ENCODE measurements at regions of chrX and their contacts with region 1.

Region 1: GRCh38 chrX:79107891-79108718 is 36.4 kb upstream of the GPR174 start:
- DNase-seq: peak in 4 of 10 donors; percentile 12 to 76 (median 68)
- ATAC-seq: peak; percentile 90 to 95
- H3K4me3 Mint-ChIP-seq: peak overlapping the region; percentile 31 to 77 (median 64)
- H3K27ac Mint-ChIP-seq: peak overlapping the region; percentile 94 to 99 (median 96)
- H3K4me1 Mint-ChIP-seq: peaks cover 9 to 67% (median 44%) of the 10 kb centered on the region in 4 donors
- H3K27me3 Mint-ChIP-seq: no peaks in the 10 kb centered on the region

Region 2: GRCh38 chrX:79065696-79066095 is 42.4 kb before region 1 on chrX:
- POLR2A ChIA-PET with region 1: no interaction called
- DNase-seq: no peak
- ATAC-seq: peak in 1 of 2 donors; percentile 35
- H3K4me3 Mint-ChIP-seq: no peak overlapping the region
- H3K27ac Mint-ChIP-seq: no peak overlapping the region
- H3K4me1 Mint-ChIP-seq: peaks cover 0 to 3% (median 0%) of the 10 kb centered on the region in 4 donors
- H3K27me3 Mint-ChIP-seq: no peaks in the 10 kb centered on the region

Region 3: DNA sequence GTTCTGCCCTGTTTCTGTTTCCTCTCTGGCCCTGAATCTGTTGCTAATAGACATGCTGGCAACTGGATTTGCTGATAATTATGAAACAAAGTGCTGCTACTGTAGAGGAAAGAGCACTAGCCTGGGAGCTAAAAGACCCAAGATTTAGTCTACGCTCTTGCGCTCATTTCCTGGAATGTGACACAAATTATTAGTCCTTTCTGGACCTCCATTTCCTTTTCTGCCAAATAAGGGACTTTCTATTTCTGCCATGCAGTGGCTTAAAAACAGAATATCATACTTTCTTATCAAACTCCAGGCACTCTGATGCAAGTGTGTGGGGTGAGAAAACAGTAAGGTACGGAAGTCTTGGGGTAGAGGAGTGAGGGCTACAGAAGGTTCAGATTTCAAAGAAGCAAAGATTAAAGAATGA is 12.0 kb before region 1 on chrX:
- POLR2A ChIA-PET with region 1: interaction called, 10 read pairs
- DNase-seq: peak in 1 of 10 donors; percentile 23
- ATAC-seq: peak; percentile 70 to 71
- H3K4me3 Mint-ChIP-seq: peak overlapping the region; percentile 5 to 76 (median 64)
- H3K27ac Mint-ChIP-seq: peak overlapping the region; percentile 85 to 98 (median 92)
- H3K4me1 Mint-ChIP-seq: peaks cover 21 to 62% (median 56%) of the 10 kb centered on the region in 4 donors
- H3K27me3 Mint-ChIP-seq: no peaks in the 10 kb centered on the region

Region 4: GRCh38 chrX:79146640-79147390 is 38.7 kb after region 1 on chrX:
- POLR2A ChIA-PET with region 1: interaction called, 30 read pairs
- DNase-seq: no peak
- ATAC-seq: peak; percentile 29 to 34
- H3K4me3 Mint-ChIP-seq: peak overlapping the region; percentile 81 to 98 (median 94)
- H3K27ac Mint-ChIP-seq: peak overlapping the region; percentile 86 to 99 (median 94)
- H3K4me1 Mint-ChIP-seq: peaks cover 9 to 56% (median 27%) of the 10 kb centered on the region in 4 donors
- H3K27me3 Mint-ChIP-seq: no peaks in the 10 kb centered on the region

Region 5: DNA sequence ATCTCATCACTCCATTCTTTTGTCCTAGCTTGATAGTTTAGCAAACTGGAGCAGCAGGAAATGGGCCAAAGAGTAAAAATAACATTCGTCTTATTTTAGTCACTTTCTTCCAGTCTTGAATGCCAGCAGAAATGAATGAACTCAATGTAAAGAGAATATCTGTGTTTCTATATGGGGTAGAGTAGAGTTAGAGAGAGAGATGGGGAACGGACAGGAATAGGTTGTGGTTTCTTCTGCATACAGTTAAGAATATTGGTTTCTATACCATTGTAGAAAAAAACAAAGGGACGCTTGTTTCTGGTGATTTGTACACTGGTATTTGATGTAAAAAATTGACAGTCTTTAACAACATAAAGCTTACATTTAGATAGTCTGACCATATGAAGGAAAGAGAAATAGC is 45.2 kb after region 1 on chrX:
- POLR2A ChIA-PET with region 1: interaction called, 20 read pairs
- DNase-seq: no peak
- ATAC-seq: peak; percentile 11 to 19
- H3K4me3 Mint-ChIP-seq: peak overlapping the region; percentile 62 to 92 (median 82)
- H3K27ac Mint-ChIP-seq: peak overlapping the region; percentile 93 to 99 (median 94)
- H3K4me1 Mint-ChIP-seq: peaks cover 16 to 86% (median 60%) of the 10 kb centered on the region in 4 donors
- H3K27me3 Mint-ChIP-seq: no peaks in the 10 kb centered on the region

Region 6: DNA sequence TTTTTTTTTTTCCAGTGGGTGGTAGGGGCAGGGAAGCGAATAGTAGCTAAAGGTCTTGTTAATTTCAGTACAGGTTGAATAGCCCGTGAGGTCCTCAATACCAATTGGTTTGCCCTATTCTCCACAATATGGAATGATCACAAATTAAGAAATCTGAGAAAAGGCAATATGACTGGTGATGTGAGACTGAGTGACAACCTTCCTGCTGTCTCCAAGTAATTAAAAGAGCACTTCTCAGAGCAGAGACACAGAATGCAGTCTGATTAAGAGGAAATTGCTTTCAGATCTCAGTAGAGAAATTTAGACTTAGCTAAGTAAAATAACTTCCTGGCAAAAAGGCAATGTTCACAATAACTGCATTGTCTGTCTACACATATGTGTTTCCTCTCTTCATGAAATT is 59.4 kb after region 1 on chrX:
- POLR2A ChIA-PET with region 1: interaction called, 10 read pairs
- DNase-seq: no peak
- ATAC-seq: peak; percentile 38 to 50
- H3K4me3 Mint-ChIP-seq: peak overlapping the region; percentile 7 to 82 (median 71)
- H3K27ac Mint-ChIP-seq: peak overlapping the region; percentile 83 to 98 (median 94)
- H3K4me1 Mint-ChIP-seq: peaks cover 20 to 94% (median 64%) of the 10 kb centered on the region in 4 donors
- H3K27me3 Mint-ChIP-seq: no peaks in the 10 kb centered on the region

Measured in naive thymus-derived CD8-positive, alpha-beta T cell (primary cell).